HCT116 (cell line): ENCODE measurements at regions of chr16 and their contacts with region 1.

Region 1: DNA sequence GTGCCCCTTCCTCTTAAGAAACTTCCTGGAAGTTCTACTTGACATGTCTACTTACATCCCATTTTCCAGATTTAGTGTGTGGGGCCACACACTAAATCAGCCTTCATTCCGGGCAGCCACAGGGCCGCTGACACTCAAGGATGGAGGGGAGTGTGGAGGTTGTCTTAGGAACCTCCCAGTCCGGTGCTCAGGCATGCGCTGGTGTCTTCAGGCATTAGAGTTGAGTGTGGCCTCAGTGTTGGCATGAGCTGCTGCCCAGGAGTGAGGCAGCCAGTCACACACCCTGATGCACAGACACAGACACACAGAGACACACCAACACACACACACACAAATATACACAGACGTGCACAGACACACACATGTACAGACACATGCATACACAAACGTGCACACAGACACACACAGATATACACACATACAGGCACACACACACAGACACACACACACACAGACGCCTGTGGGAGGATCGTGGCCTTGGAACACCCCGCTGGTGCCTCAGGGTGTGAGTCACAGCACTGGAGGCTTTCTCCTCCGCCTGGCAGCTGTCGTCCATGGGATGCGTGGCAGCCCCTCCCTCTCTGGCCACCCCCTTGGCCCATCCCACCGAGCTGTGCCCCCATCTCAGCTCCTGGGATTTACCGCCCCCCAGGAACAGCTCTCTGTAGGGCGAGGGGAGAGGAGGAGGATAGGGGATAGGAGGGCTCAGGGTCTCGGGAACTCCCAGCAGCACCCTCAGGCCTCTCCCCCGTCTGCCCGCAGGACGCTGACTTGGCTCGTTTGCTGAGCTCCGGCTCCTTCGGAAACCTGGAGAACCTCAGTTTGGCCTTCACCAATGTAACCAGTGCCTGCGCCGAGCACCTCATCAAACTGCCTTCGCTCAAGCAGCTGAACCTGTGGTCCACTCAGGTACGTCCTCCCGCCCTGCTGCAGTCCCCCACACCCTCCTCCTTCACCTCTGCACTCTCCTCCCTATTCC is 75.6 kb upstream of the PLCG2 start:
- DNase-seq: peak; percentile 26
- ATAC-seq: peak; percentile 71
- H3K4me3 ChIP-seq: no peak overlapping the region
- H3K27ac ChIP-seq: peak overlapping the region; percentile 1; the same call in 1 of the 2 replicates
- H3K4me1 ChIP-seq: peaks cover 26 to 65% of the 10 kb centered on the region in 2 experiments
- H3K27me3 ChIP-seq: no peaks in the 10 kb centered on the region
- CTCF ChIP-seq: no peak
- POLR2A ChIP-seq: no peak
- RAD21 ChIP-seq: no peak

Region 2: DNA sequence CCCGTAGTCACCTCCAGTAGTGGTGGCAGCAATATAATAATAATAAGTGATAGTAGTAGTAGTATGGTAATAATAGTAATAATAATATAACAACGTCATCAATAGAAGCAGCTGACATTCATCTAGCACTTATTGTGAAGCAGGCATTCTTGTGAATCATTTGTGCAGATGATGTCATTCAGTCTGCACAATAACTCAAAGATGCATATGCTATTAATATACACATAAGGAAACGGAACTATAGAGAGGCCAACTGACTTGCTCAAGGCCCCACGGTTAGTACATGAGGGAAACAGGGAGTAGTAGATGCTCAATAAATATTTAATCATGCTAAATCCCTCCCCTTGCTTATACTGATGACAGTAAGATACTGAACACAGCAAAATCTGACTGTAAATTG is 424.1 kb before region 1 on chr16:
- CTCF ChIA-PET with region 1: no interaction called
- POLR2A ChIA-PET with region 1: no interaction called
- RAD21 ChIA-PET with region 1: no interaction called
- intact Hi-C with region 1: no loop called
- DNase-seq: no peak
- ATAC-seq: no peak
- H3K4me3 ChIP-seq: no peak overlapping the region
- H3K27ac ChIP-seq: no peak overlapping the region
- H3K4me1 ChIP-seq: peaks cover 7 to 11% of the 10 kb centered on the region in 2 experiments; a peak in 2 of 4 replicates
- H3K27me3 ChIP-seq: no peaks in the 10 kb centered on the region
- CTCF ChIP-seq: no peak
- POLR2A ChIP-seq: no peak
- RAD21 ChIP-seq: no peak

Region 3: GRCh38 chr16:81730090-81731051 is 26.9 kb after region 1 on chr16:
- CTCF ChIA-PET with region 1: no interaction called
- POLR2A ChIA-PET with region 1: no interaction called
- RAD21 ChIA-PET with region 1: interaction called, 4 to 10 read pairs
- intact Hi-C with region 1: no loop called
- DNase-seq: peak; percentile 75
- ATAC-seq: peak; percentile 84
- H3K4me3 ChIP-seq: peak overlapping the region; percentile 19 to 38
- H3K27ac ChIP-seq: peak overlapping the region; percentile 38
- H3K4me1 ChIP-seq: peaks cover 18 to 34% of the 10 kb centered on the region in 2 experiments
- H3K27me3 ChIP-seq: no peaks in the 10 kb centered on the region
- CTCF ChIP-seq: peak; percentile 54 to 88 (median 88); a peak in 5 of 6 replicates
- POLR2A ChIP-seq: peak; percentile 36
- RAD21 ChIP-seq: peak; percentile 46

Region 4: DNA sequence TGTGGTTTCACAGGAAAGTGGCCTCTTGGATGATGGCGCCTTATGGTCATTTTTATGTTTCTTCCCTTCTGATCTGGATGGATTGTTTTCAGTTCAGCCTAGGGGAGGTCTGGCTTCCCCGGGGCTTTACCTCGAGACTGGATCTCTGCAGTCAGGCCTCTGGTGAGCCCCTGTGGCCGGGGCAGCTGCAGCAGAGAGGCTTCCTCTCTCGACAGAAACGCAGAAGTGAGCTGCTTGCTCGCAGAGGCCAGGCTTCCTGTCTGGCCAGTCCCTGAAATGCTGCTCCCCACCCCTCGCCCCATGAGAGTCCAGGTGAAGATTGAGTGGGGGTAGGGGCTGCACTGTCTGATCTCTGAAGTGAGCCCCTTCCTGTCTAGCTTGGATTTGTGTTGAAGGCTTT is 119.6 kb after region 1 on chr16:
- CTCF ChIA-PET with region 1: no interaction called
- POLR2A ChIA-PET with region 1: no interaction called
- RAD21 ChIA-PET with region 1: no interaction called
- intact Hi-C with region 1: no loop called
- DNase-seq: no peak
- ATAC-seq: no peak
- H3K4me3 ChIP-seq: no peak overlapping the region
- H3K27ac ChIP-seq: no peak overlapping the region
- H3K4me1 ChIP-seq: peaks cover 9 to 13% of the 10 kb centered on the region in 2 experiments
- H3K27me3 ChIP-seq: no peaks in the 10 kb centered on the region
- CTCF ChIP-seq: no peak
- POLR2A ChIP-seq: no peak
- RAD21 ChIP-seq: no peak